CD4-positive, alpha-beta T cell (primary cell): ENCODE measurements at regions of chr19 and their contacts with region 1.

Region 1: GRCh38 chr19:38869856-38870607 is 8.0 kb downstream of the RINL start:
- DNase-seq: peak; percentile 87 to 98 (median 95)
- ATAC-seq: peak; percentile 93
- H3K4me3 ChIP-seq: peak overlapping the region; percentile 72
- H3K4me3 Mint-ChIP-seq: peak overlapping the region; percentile 86
- H3K27ac ChIP-seq: peak overlapping the region; percentile 62 to 72
- H3K27ac Mint-ChIP-seq: peak overlapping the region; percentile 86
- H3K4me1 ChIP-seq: peaks cover 52% of the 10 kb centered on the region
- H3K4me1 Mint-ChIP-seq: peaks cover 66% of the 10 kb centered on the region
- H3K27me3 ChIP-seq: no peaks in the 10 kb centered on the region
- H3K27me3 Mint-ChIP-seq: no peaks in the 10 kb centered on the region
- CTCF ChIP-seq: peak; percentile 88

Region 2: GRCh38 chr19:38729653-38730469 is 140.2 kb before region 1 on chr19:
- CTCF ChIA-PET with region 1: interaction called, 3 read pairs
- POLR2A ChIA-PET with region 1: no interaction called
- intact Hi-C with region 1: loop called (anchors 5 kb)
- DNase-seq: peak; percentile 67 to 86 (median 72)
- ATAC-seq: peak; percentile 75
- H3K4me3 ChIP-seq: no peak overlapping the region
- H3K4me3 Mint-ChIP-seq: peak overlapping the region; percentile 30
- H3K27ac ChIP-seq: no peak overlapping the region
- H3K27ac Mint-ChIP-seq: peak overlapping the region; percentile 36
- H3K4me1 ChIP-seq: peaks cover 40% of the 10 kb centered on the region
- H3K4me1 Mint-ChIP-seq: peaks cover 15% of the 10 kb centered on the region
- H3K27me3 ChIP-seq: no peaks in the 10 kb centered on the region
- H3K27me3 Mint-ChIP-seq: no peaks in the 10 kb centered on the region
- CTCF ChIP-seq: peak; percentile 88

Region 3: DNA sequence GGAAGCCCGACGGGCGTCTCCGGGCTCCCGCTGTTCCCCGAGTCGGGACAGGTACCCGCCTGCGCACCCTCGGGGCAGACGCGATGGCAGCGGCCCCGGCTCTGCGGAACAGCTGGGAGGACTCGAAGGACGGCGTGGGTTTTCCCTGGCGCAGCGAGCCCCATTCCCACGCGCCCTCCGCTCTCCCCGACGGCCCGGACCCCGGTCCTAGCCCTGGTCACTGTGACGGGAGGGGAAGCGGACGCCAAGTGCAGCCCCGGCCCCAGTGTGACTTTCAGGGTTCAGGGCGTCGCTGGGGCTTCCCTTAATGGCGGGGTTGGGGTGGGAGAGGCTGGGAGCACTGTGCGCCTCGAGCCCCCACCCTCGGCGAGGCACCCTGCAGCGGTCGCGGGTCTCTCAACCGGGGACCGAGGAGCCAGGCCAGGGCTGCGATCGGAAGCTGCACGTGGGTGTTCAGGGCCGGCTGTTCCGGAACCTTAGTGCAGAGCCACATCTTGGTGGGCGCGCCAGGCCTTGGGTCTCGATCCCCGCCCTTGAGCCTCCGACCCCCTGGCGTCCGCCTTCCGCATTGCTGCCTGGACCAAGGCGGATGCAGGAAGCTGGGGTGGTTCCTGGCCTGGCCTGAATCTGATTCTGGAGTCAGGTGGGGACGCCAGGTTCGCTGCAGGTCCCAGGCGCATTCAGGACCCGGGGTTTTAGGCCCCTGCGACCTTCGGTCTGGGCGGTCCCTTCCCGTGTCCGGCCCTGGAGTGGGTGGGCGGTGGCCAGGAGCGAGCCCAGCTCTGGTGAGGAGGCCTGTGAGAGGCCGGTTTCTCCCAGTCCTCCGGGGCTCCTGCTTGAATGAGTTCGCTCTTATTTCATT is 77.6 kb before region 1 on chr19:
- CTCF ChIA-PET with region 1: no interaction called
- POLR2A ChIA-PET with region 1: no interaction called
- intact Hi-C with region 1: no loop called
- DNase-seq: peak in 10 of 14 experiments; percentile 10 to 59 (median 36)
- ATAC-seq: peak; percentile 33
- H3K4me3 ChIP-seq: peak overlapping the region; percentile 50
- H3K4me3 Mint-ChIP-seq: peak overlapping the region; percentile 78
- H3K27ac ChIP-seq: no peak overlapping the region
- H3K27ac Mint-ChIP-seq: no peak overlapping the region
- H3K4me1 ChIP-seq: peaks cover 8% of the 10 kb centered on the region
- H3K4me1 Mint-ChIP-seq: peaks cover 5% of the 10 kb centered on the region
- H3K27me3 ChIP-seq: no peaks in the 10 kb centered on the region
- H3K27me3 Mint-ChIP-seq: no peaks in the 10 kb centered on the region
- CTCF ChIP-seq: no peak

Region 4: DNA sequence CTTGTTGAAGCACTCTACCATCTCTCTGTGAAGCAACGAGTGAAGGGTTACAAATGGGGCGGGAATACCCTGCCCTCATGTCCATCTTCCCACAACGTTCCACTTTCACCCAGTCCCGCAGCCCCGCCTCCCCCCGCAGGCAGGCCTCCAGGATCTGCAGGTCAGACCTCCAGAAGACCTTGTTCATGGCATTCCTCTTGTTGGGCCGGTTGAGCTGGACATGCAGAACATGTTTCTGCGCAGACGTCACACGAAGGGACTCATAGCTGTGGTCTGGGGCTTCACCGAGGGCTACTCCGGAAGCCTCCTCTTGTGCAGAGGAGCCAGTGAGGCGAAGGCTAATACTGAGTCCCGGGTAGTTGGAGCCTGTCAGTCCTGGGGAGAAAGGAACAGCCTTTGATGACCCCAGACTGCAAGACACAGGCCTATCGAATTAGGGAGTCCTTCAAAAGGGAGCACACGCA is 38.9 kb before region 1 on chr19:
- CTCF ChIA-PET with region 1: interaction called, 15 read pairs
- POLR2A ChIA-PET with region 1: interaction called, 11 read pairs
- intact Hi-C with region 1: loop called (anchors 2 kb)
- DNase-seq: peak in 3 of 14 experiments; percentile 7 to 61 (median 44)
- ATAC-seq: peak; percentile 7
- H3K4me3 ChIP-seq: peak overlapping the region; percentile 73
- H3K4me3 Mint-ChIP-seq: peak overlapping the region; percentile 94
- H3K27ac ChIP-seq: peak overlapping the region; percentile 69 to 74
- H3K27ac Mint-ChIP-seq: peak overlapping the region; percentile 92
- H3K4me1 ChIP-seq: peaks cover 34% of the 10 kb centered on the region
- H3K4me1 Mint-ChIP-seq: peaks cover 39% of the 10 kb centered on the region
- H3K27me3 ChIP-seq: no peaks in the 10 kb centered on the region
- H3K27me3 Mint-ChIP-seq: no peaks in the 10 kb centered on the region
- CTCF ChIP-seq: no peak

Region 5: GRCh38 chr19:38849860-38850435 is 20.1 kb before region 1 on chr19 and contains the start of gene HNRNPL:
- CTCF ChIA-PET with region 1: interaction called, 7 read pairs
- POLR2A ChIA-PET with region 1: interaction called, 170 read pairs
- intact Hi-C with region 1: loop called (anchors 1 to 2 kb)
- DNase-seq: peak; percentile 98 to 100 (median 99)
- ATAC-seq: peak; percentile 69
- H3K4me3 ChIP-seq: peak within 1 kb of the TSS; percentile 76
- H3K4me3 Mint-ChIP-seq: peak within 1 kb of the TSS; percentile 98
- H3K27ac ChIP-seq: peak within 1 kb of the TSS; percentile 95 to 97
- H3K27ac Mint-ChIP-seq: peak within 1 kb of the TSS; percentile 97
- H3K4me1 ChIP-seq: peaks cover 66% of the 10 kb centered on the region
- H3K4me1 Mint-ChIP-seq: peaks cover 63% of the 10 kb centered on the region
- H3K27me3 ChIP-seq: no peaks in the 10 kb centered on the region
- H3K27me3 Mint-ChIP-seq: no peaks in the 10 kb centered on the region
- CTCF ChIP-seq: peak; percentile 16
- total RNA-seq, gene HNRNPL: 535 to 565 TPM

Region 6: DNA sequence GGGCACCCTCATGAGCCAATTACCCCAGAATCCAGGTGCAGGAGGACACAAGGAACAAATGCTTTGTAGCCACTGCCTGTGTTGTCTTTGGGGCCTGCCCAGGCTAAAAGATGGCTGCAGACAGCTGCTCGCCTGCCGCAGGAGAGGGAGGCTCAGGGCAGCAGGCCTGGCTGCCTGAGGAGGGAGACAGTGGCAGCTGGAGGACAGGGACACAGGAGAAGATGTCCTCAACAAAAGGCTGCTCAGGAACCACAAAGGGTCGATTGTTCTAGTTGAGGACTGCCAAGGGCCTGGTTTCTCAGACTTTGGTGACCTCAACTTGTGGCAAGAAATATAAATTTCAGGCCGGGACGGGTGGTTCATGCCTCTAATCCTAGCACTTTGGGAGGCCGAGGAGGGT is 21.7 kb after region 1 on chr19:
- CTCF ChIA-PET with region 1: interaction called, 17 read pairs
- POLR2A ChIA-PET with region 1: no interaction called
- intact Hi-C with region 1: no loop called
- DNase-seq: peak in 1 of 14 experiments; percentile 2
- ATAC-seq: no peak
- H3K4me3 ChIP-seq: no peak overlapping the region
- H3K4me3 Mint-ChIP-seq: no peak overlapping the region
- H3K27ac ChIP-seq: no peak overlapping the region
- H3K27ac Mint-ChIP-seq: no peak overlapping the region
- H3K4me1 ChIP-seq: peaks cover 16% of the 10 kb centered on the region
- H3K4me1 Mint-ChIP-seq: peaks cover 6% of the 10 kb centered on the region
- H3K27me3 ChIP-seq: no peaks in the 10 kb centered on the region
- H3K27me3 Mint-ChIP-seq: no peaks in the 10 kb centered on the region
- CTCF ChIP-seq: no peak